ENCODE measurements at regions of chr1 and their contacts with region 1.

Region 1: GRCh38 chr1:64268653-64269557 is 65.5 kb downstream of the UBE2U start:
- H3K4me3 ChIP-seq: no peak overlapping the region
- H3K27ac ChIP-seq: peak overlapping the region; percentile 47; the same call in 1 of the 2 replicates
- H3K4me1 ChIP-seq: no peaks in the 10 kb centered on the region
- CTCF ChIP-seq: peak; percentile 42; the same call in 1 of the 2 replicates

Region 2: GRCh38 chr1:64823691-64824476 is 555.0 kb after region 1 on chr1:
- CTCF ChIA-PET with region 1: interaction called, 19 read pairs
- POLR2A ChIA-PET with region 1: no interaction called
- H3K4me3 ChIP-seq: no peak overlapping the region
- H3K27ac ChIP-seq: no peak overlapping the region
- H3K4me1 ChIP-seq: no peaks in the 10 kb centered on the region
- CTCF ChIP-seq: peak; percentile 64; the same call in 1 of the 2 replicates

Measured in HEK293 (cell line).